Heart right ventricle (tissue), 16 donors: ENCODE measurements at regions of chr1 and their contacts with region 1.

Region 1: GRCh38 chr1:207963427-207964194 is 52.7 kb upstream of the CD34 start:
- DNase-seq: peak; percentile 87 to 95
- ATAC-seq: peak; percentile 80 to 90 (median 82)
- H3K4me3 ChIP-seq: peak overlapping the region in 9 of 10 donors; percentile 41 to 66 (median 60)
- H3K27ac ChIP-seq: peak overlapping the region; percentile 89 to 98 (median 94)
- H3K4me1 ChIP-seq: peaks cover 21 to 65% (median 48%) of the 10 kb centered on the region in 9 donors
- H3K27me3 ChIP-seq: peaks cover 0 to 18% (median 0%) of the 10 kb centered on the region in 7 donors
- CTCF ChIP-seq: peak; percentile 97 to 100 (median 99)

Region 2: DNA sequence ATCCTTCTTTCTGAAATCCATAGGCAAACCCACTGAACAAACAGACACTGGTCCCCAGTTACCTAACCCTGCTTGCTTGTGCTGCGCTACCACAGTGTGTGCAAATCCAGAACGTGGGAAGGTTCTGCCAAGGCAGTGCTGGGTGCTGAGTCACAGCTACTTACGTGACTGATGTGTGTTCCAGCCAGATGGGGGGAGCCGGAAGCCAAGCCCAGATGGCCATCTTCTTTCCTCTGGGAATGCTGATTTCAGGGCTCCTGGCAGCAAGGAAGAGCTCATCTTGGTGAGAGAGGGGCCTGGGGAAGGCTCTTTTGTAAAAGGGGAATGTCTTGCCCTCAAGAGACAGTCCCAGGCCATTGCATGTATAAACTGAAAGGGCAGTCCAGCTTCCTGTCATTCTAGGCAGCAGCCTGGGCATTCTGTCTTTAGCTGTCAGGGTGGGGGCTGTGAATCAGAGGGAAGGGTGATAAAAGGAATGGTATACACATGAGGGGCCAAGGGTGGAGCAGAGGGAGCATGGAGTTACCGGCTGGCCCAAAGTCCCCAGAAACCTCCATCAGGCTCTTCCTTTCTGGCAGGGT is 157.7 kb before region 1 on chr1:
- intact Hi-C with region 1: loop called in 1 of 10 experiments (anchors 5 kb)
- DNase-seq: peak; percentile 76 to 79
- ATAC-seq: peak; percentile 60 to 87 (median 80)
- H3K4me3 ChIP-seq: no peak overlapping the region
- H3K27ac ChIP-seq: peak overlapping the region; percentile 42 to 81 (median 76)
- H3K4me1 ChIP-seq: peaks cover 64 to 89% (median 82%) of the 10 kb centered on the region in 9 donors
- H3K27me3 ChIP-seq: no peaks in the 10 kb centered on the region
- CTCF ChIP-seq: no peak

Region 3: GRCh38 chr1:207885129-207886032 is 78.2 kb before region 1 on chr1:
- intact Hi-C with region 1: loop called in 9 of 10 experiments (anchors 1 to 5 kb)
- DNase-seq: peak; percentile 84 to 90
- ATAC-seq: peak; percentile 82 to 92 (median 90)
- H3K4me3 ChIP-seq: no peak overlapping the region
- H3K27ac ChIP-seq: peak overlapping the region in 9 of 10 donors; percentile 39 to 98 (median 85)
- H3K4me1 ChIP-seq: peaks cover 18 to 86% (median 79%) of the 10 kb centered on the region in 9 donors
- H3K27me3 ChIP-seq: no peaks in the 10 kb centered on the region
- CTCF ChIP-seq: peak; percentile 90 to 98 (median 97)

Region 4: GRCh38 chr1:207903767-207904166 is 59.8 kb before region 1 on chr1:
- intact Hi-C with region 1: loop called in 2 of 10 experiments (anchors 5 kb)
- DNase-seq: peak in 1 of 2 donors; percentile 1
- ATAC-seq: no peak
- H3K4me3 ChIP-seq: no peak overlapping the region
- H3K27ac ChIP-seq: peak overlapping the region in 5 of 10 donors; percentile 15 to 98 (median 64)
- H3K4me1 ChIP-seq: peaks cover 15 to 98% (median 47%) of the 10 kb centered on the region in 9 donors
- H3K27me3 ChIP-seq: peaks cover 0 to under 1% (median 0%) of the 10 kb centered on the region in 7 donors
- CTCF ChIP-seq: no peak

Region 5: GRCh38 chr1:207919523-207920170 is 44.0 kb before region 1 on chr1:
- intact Hi-C with region 1: loop called in 5 of 10 experiments (anchors 1 to 5 kb)
- DNase-seq: no peak
- ATAC-seq: peak; percentile 43 to 73 (median 58)
- H3K4me3 ChIP-seq: no peak overlapping the region
- H3K27ac ChIP-seq: peak overlapping the region; percentile 28 to 92 (median 69)
- H3K4me1 ChIP-seq: peaks cover 33 to 86% (median 81%) of the 10 kb centered on the region in 9 donors
- H3K27me3 ChIP-seq: peaks cover 0 to 5% (median 0%) of the 10 kb centered on the region in 7 donors
- CTCF ChIP-seq: no peak